ENCODE measurements at regions of chr22 and their contacts with region 1.

Region 1: GRCh38 chr22:32985899-32986765 is 72.0 kb downstream of the SYN3 start:
- DNase-seq: peak; percentile 64 to 83 (median 69)
- H3K4me3 ChIP-seq: no peak overlapping the region
- H3K27ac ChIP-seq: no peak overlapping the region
- H3K4me1 ChIP-seq: no peaks in the 10 kb centered on the region
- H3K27me3 ChIP-seq: no peaks in the 10 kb centered on the region
- CTCF ChIP-seq: peak; percentile 81 to 87 (median 82)
- EP300 ChIP-seq: no peak
- POLR2A ChIP-seq: no peak

Region 2: DNA sequence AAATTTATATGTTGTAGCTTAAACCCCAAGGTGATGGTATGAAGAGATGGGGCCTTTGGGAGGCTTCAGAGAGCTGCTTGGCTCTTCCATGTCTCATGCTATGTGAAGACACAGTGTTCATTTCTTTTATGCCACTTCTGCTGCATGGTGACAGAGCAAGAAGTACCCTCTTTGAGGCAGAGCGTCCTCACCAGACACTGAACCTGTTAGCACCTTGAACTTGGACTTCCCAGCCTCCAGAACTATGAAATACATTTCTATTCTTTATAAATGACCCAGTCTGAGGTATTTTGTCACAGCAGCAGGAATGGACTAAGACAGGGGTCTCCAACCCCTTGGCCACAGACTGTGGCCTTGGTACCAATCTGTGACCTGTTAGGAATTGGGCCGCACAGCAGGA is 331.1 kb before region 1 on chr22:
- intact Hi-C with region 1: loop called in 3 of 4 experiments (anchors 5 to 10 kb)
- DNase-seq: no peak
- H3K4me3 ChIP-seq: no peak overlapping the region
- H3K27ac ChIP-seq: no peak overlapping the region
- H3K4me1 ChIP-seq: no peaks in the 10 kb centered on the region
- H3K27me3 ChIP-seq: no peaks in the 10 kb centered on the region
- CTCF ChIP-seq: no peak
- EP300 ChIP-seq: no peak
- POLR2A ChIP-seq: no peak

Region 3: DNA sequence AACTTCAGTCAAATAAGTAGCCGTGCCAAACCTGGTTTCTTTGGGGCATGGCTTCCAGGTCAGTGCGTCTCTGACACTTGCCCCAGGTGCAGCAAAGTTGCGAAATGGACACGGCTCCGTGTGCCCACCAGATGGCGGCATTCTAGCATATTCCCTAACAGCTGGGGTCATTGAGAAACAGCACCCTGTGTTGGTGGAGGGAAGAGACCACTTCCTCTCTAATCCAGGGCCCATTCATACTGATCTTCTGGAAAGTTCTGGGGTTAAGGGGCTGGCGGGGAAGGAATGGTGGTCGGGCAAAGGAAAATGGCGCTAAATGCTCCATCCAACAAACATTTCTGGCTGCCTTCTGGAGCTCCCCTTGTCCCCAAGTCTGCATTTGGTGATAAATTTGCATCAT is 325.8 kb before region 1 on chr22:
- intact Hi-C with region 1: loop called in 3 of 4 experiments (anchors 5 to 10 kb)
- DNase-seq: peak; percentile 33 to 69 (median 57)
- H3K4me3 ChIP-seq: no peak overlapping the region
- H3K27ac ChIP-seq: no peak overlapping the region
- H3K4me1 ChIP-seq: no peaks in the 10 kb centered on the region
- H3K27me3 ChIP-seq: no peaks in the 10 kb centered on the region
- CTCF ChIP-seq: peak; percentile 19 to 52 (median 36)
- EP300 ChIP-seq: no peak
- POLR2A ChIP-seq: no peak

Region 4: GRCh38 chr22:32803020-32803754 is 182.9 kb before region 1 on chr22:
- intact Hi-C with region 1: loop called in 3 of 4 experiments (anchors 2 to 10 kb)
- DNase-seq: peak in 3 of 5 donors; percentile 32 to 51 (median 46)
- H3K4me3 ChIP-seq: peak overlapping the region; percentile 61
- H3K27ac ChIP-seq: peak overlapping the region in 1 of 2 donors; percentile 17
- H3K4me1 ChIP-seq: peaks cover 4% of the 10 kb centered on the region
- H3K27me3 ChIP-seq: no peaks in the 10 kb centered on the region
- CTCF ChIP-seq: no peak
- EP300 ChIP-seq: no peak
- POLR2A ChIP-seq: no peak

Region 5: GRCh38 chr22:32967386-32968101 is 18.6 kb before region 1 on chr22:
- intact Hi-C with region 1: no loop called
- DNase-seq: no peak
- H3K4me3 ChIP-seq: no peak overlapping the region
- H3K27ac ChIP-seq: no peak overlapping the region
- H3K4me1 ChIP-seq: no peaks in the 10 kb centered on the region
- H3K27me3 ChIP-seq: no peaks in the 10 kb centered on the region
- CTCF ChIP-seq: no peak
- EP300 ChIP-seq: no peak
- POLR2A ChIP-seq: no peak

Measured in ovary (tissue), 10 donors.